AG04449 (cell line): ENCODE measurements at regions of chr16 and their contacts with region 1.

Region 1: GRCh38 chr16:21190599-21190998 is 20.8 kb downstream of the ZP2 start:
- DNase-seq: peak; percentile 26
- H3K4me3 ChIP-seq: no peak overlapping the region
- CTCF ChIP-seq: no peak

Region 2: DNA sequence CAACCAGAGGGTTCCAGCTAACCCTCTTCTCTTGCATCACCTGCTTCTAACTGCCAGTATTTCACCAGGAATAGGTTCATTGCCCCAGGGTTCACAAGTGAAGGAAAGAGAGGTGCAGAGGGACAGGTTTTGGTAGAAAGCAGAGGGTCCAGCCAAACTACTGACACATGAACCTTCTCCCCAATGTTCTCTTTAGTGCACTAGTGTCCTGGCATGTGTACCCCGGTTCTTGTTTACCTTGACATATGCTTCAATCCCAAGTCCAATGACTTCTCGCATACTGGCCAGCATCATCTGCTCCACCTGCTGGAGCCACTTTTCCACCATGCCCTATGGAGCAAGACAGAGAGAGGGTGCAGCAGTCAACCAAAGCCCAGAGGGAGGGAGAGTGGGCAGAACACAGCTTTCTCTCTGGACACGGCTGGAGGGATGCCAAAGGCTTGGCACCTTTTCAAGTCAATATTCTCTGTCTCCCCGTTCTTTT is 130.5 kb before region 1 on chr16:
- CTCF ChIA-PET with region 1: no interaction called
- POLR2A ChIA-PET with region 1: no interaction called
- DNase-seq: no peak
- H3K4me3 ChIP-seq: no peak overlapping the region
- CTCF ChIP-seq: no peak

Region 3: DNA sequence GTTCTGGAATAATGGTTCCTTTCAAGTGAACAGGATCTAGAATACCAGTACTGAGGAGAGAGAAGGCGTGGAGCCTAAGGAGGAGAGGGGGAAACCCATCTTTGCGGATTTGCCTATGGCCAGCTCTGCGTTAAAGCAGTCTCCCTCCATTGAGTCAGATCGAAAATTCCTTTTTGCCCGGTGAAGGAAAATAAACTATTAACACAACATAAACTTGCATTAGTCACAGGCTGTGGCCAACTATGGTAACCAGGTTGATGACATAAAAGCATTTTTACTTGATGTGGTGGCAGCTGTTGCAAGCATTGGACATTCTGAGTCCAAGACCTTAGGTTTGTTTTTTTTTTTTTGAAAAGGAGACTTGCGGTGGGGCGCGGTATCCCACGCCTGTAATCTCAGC is 23.2 kb before region 1 on chr16:
- CTCF ChIA-PET with region 1: interaction called, 18 read pairs
- POLR2A ChIA-PET with region 1: interaction called, 4 read pairs
- DNase-seq: peak; percentile 58
- H3K4me3 ChIP-seq: no peak overlapping the region
- CTCF ChIP-seq: no peak

Region 4: GRCh38 chr16:21175397-21175796 is 15.2 kb before region 1 on chr16:
- CTCF ChIA-PET with region 1: interaction called, 36 read pairs
- POLR2A ChIA-PET with region 1: no interaction called
- DNase-seq: no peak
- H3K4me3 ChIP-seq: no peak overlapping the region
- CTCF ChIP-seq: no peak

Region 5: GRCh38 chr16:21226749-21227148 is 36.1 kb after region 1 on chr16:
- CTCF ChIA-PET with region 1: no interaction called
- POLR2A ChIA-PET with region 1: no interaction called
- DNase-seq: no peak
- H3K4me3 ChIP-seq: no peak overlapping the region
- CTCF ChIP-seq: no peak

Region 6: GRCh38 chr16:21277927-21278706 is 87.5 kb after region 1 on chr16 and contains the start of gene CRYM:
- CTCF ChIA-PET with region 1: interaction called, 44 read pairs
- POLR2A ChIA-PET with region 1: no interaction called
- DNase-seq: no peak
- H3K4me3 ChIP-seq: peak within 1 kb of the TSS; percentile 27
- CTCF ChIP-seq: peak; percentile 82

Region 7: GRCh38 chr16:21300309-21301167 is 109.9 kb after region 1 on chr16:
- CTCF ChIA-PET with region 1: interaction called, 27 read pairs
- POLR2A ChIA-PET with region 1: interaction called, 9 read pairs
- DNase-seq: peak; percentile 99
- H3K4me3 ChIP-seq: peak overlapping the region; percentile 80
- CTCF ChIP-seq: peak; percentile 88